AG04449 (cell line): ENCODE measurements at regions of chr22 and their contacts with region 1.

Region 1: GRCh38 chr22:20885557-20886323 is 26.9 kb downstream of the SNAP29 start:
- DNase-seq: peak; percentile 16
- H3K4me3 ChIP-seq: no peak overlapping the region
- CTCF ChIP-seq: peak; percentile 97

Region 2: GRCh38 chr22:20803696-20804324 is 81.9 kb before region 1 on chr22:
- CTCF ChIA-PET with region 1: interaction called, 10 read pairs
- POLR2A ChIA-PET with region 1: no interaction called
- DNase-seq: no peak
- H3K4me3 ChIP-seq: no peak overlapping the region
- CTCF ChIP-seq: peak; percentile 76

Region 3: DNA sequence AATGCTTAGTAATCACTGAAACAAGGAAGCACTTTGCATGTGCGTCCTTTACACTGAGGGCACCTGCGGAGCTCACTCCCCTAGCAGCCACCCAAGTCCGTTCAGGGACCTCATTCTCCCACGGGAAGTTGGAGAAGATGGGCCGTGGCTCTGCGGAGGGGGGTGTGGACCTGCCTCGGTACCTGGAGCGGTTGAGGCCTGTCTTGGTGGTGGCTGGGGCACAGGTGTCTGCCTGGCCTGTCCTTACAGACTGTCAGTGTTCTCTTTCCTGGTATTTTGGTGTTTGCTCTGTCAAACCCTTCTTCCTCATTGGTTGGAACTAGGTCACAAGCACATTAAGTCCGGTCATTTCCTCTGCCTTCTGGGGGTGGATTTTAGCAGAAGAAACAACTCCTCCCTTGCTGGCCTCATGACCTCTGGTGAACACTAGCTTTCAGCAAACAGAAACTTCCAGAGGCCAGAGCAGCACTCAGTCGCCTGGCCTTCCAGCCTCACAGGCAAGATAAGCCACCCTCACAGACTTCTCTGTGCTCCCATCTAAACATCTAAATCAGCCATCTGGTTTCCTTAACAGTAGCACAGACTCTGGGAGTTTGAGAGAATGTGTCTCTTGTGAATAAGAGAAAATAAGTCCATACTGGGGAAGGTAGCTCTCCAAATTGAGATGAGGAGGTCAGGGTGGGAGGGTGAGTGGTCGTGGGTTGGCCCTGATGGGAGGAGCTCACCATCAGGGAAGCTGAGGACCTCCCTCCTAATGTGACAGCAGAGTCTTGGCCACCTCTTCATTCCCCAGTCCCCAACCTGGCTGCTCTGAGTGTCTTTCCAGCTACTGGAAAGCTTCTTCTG is 18.3 kb before region 1 on chr22:
- CTCF ChIA-PET with region 1: interaction called, 23 read pairs
- POLR2A ChIA-PET with region 1: interaction called, 3 read pairs
- DNase-seq: no peak
- H3K4me3 ChIP-seq: no peak overlapping the region
- CTCF ChIP-seq: no peak

Region 4: GRCh38 chr22:20873214-20873613 is 12.5 kb before region 1 on chr22:
- CTCF ChIA-PET with region 1: interaction called, 23 read pairs
- POLR2A ChIA-PET with region 1: interaction called, 3 read pairs
- DNase-seq: no peak
- H3K4me3 ChIP-seq: no peak overlapping the region
- CTCF ChIP-seq: no peak

Region 5: DNA sequence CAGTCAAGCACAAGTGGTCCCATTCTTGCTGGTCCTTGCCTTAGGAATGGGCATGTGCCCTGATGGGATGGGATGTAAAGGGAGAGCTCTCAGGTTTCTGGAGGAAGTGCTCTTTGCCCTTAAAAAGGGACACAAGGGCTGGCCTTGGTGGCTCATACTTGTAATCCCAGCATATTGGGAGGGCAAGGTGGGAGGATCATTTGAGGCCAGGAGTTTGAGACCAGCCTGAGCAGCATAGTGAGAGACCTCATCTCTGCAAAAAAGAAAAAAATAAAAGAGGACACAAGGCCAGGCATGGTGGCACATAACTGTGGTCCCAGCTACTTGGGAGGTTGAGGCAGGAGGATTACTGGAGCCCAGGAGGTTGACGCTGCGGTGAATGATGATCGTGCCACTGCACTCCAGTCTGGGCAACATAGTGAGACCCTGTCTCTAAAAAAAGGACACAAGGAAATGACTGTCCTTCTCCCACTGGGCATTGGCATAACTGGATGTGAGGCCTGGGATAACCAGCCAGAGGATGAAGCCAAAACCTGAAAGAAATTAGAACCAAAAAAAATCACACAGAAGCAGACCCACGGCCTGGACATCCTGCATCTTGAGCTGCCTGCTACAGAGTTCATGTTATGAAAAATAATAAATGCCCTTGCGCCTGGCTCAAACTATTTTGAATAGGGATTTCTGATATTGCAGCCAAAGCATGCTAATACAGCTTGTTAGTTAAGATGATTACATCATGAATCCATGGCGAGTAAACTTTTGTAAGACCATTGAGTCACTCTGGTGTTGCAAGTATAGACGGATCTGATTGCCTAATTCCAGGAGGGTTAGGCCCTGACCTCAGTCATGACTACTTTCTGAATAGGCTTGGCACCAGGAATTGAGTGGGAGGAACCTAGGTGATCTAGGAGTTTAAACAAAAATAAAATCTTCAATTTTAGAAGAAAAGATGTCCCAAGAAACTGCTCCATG is 18.6 kb after region 1 on chr22:
- CTCF ChIA-PET with region 1: interaction called, 21 read pairs
- POLR2A ChIA-PET with region 1: no interaction called
- DNase-seq: peak; percentile 86
- H3K4me3 ChIP-seq: no peak overlapping the region
- CTCF ChIP-seq: no peak

Region 6: GRCh38 chr22:20981787-20982562 is 96.2 kb after region 1 on chr22 and contains the start of gene LZTR1:
- CTCF ChIA-PET with region 1: interaction called, 11 read pairs
- POLR2A ChIA-PET with region 1: interaction called, 8 read pairs
- DNase-seq: no peak
- H3K4me3 ChIP-seq: peak within 1 kb of the TSS; percentile 90
- CTCF ChIP-seq: peak; percentile 90